ENCODE measurements at regions of chr2 and their contacts with region 1.

Region 1: DNA sequence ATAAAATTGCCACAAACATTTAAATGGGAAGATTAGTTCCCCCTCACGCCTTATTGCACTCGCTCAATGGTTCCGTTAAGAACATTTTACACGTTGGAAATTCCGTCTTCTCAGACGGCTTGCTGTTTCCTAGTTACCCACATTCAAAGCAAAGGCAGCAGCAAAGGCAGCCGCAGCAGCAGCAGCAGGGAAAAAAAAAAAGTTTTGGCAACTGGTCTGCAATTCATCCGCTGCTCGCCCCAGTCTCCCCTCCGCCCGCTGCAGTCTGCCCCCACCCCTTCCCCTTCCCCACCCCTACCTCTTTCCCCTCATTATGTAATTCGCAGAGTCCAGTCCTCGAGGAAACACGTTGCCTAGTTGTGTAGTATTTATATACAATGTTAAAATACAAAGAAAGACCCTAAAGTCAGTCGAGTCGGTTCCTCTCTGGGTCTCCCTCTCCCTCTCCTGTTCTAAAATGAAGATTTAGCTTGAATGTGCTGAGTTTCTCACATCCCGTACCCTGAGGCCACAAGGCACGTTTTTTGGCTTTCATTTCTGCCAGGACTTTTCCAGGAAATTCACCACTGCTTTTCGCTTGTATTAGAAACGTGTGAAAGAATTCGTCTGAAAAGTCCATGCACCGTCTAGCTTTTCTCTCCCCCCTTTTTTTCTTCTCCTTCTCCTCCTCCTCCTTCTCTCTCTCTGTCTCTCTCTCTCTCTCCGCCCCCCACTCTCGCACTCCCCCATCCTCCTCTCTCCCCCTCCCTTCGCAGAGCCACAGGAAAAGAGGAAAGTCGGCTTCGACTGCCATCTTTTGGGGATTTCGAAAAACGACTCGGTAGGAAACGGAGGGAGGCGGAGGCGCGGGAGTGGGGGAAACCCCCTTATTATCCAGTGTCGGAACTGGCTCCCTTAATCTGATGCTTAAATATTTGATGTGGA is 140.0 kb downstream of the MEIS1 start:
- DNase-seq: peak in 5 of 10 donors; percentile 55 to 80 (median 69)
- H3K4me3 ChIP-seq: peak overlapping the region; percentile 24 to 72 (median 52)
- H3K27ac ChIP-seq: peak overlapping the region in 39 of 59 donors; percentile 21 to 89 (median 67)
- H3K27me3 ChIP-seq: peaks cover 15 to 71% (median 50%) of the 10 kb centered on the region in 45 donors
- CTCF ChIP-seq: peak in 55 of 56 donors; percentile 15 to 75 (median 53)

Region 2: GRCh38 chr2:65640793-65641103 is 934.2 kb before region 1 on chr2:
- intact Hi-C with region 1: loop called in 1 of 2 experiments (anchors 5 kb)
- DNase-seq: no peak
- H3K4me3 ChIP-seq: peak overlapping the region in 6 of 59 donors; percentile 12 to 40 (median 24)
- H3K27ac ChIP-seq: no peak overlapping the region
- H3K27me3 ChIP-seq: peaks cover 0 to 10% (median 0%) of the 10 kb centered on the region in 45 donors
- CTCF ChIP-seq: peak in 6 of 56 donors; percentile 1 to 30 (median 6)

Region 3: DNA sequence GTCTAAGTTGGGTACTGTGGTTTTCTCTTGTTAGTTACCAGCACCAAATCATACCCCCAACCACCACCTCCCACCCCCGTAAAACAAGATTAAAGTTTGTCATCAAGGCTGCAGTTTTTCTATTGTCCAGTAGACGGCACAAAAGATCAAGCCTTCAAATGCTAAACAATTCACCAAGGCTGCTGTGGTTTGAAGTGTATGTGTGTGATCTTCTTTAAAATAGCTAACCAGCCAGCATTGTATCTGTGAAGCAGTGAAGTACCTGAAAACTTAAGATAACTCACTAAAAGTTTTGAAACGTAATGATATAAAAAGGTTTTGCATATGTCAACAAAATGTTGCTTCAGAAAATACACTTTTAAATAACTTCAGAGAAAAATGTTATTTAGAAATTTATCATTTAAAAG is 145.9 kb before region 1 on chr2:
- intact Hi-C with region 1: loop called (anchors 2 kb)
- DNase-seq: no peak
- H3K4me3 ChIP-seq: no peak overlapping the region
- H3K27ac ChIP-seq: no peak overlapping the region
- H3K27me3 ChIP-seq: peaks cover 0 to 63% (median 47%) of the 10 kb centered on the region in 45 donors
- CTCF ChIP-seq: peak; percentile 59 to 92 (median 80)

Region 4: DNA sequence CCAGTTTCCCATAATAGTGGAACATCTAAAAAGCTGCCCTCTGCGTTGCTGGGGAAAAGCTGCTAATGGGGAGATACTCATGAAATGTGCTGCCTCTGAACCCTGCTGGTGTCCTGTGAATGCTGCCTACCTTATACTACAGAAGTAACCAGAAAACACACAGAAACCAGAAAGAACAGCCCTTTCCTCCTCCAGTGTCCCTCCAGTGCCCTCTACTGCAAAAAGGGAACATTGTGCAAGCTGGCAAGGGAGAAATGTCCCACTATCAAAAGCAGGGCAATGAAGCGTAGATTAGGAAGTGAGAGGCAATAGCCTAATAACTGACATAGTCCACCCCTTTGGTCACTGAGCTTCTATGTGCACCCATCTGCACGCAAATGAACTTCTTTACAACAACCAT is 659.5 kb after region 1 on chr2:
- intact Hi-C with region 1: no loop called
- DNase-seq: peak in 1 of 10 donors; percentile 9
- H3K4me3 ChIP-seq: no peak overlapping the region
- H3K27ac ChIP-seq: no peak overlapping the region
- H3K27me3 ChIP-seq: peaks cover 0 to 8% (median 0%) of the 10 kb centered on the region in 45 donors
- CTCF ChIP-seq: peak in 6 of 56 donors; percentile 8 to 25 (median 16)

Measured in dorsolateral prefrontal cortex (tissue), 120 donors.